BJ (cell line): ENCODE measurements at regions of chr16 and their contacts with region 1.

Region 1: GRCh38 chr16:19502395-19503131 is 19.3 kb downstream of the GDE1 start:
- DNase-seq: no peak
- H3K4me3 ChIP-seq: no peak overlapping the region
- H3K27me3 ChIP-seq: no peaks in the 10 kb centered on the region
- CTCF ChIP-seq: peak; percentile 82

Region 2: GRCh38 chr16:19488213-19488640 is 14.3 kb before region 1 on chr16:
- CTCF ChIA-PET with region 1: interaction called, 16 read pairs
- POLR2A ChIA-PET with region 1: no interaction called
- DNase-seq: no peak
- H3K4me3 ChIP-seq: no peak overlapping the region
- H3K27me3 ChIP-seq: no peaks in the 10 kb centered on the region
- CTCF ChIP-seq: no peak

Region 3: GRCh38 chr16:19517418-19518089 is 15.0 kb after region 1 on chr16:
- CTCF ChIA-PET with region 1: interaction called, 25 read pairs
- POLR2A ChIA-PET with region 1: interaction called, 5 read pairs
- DNase-seq: no peak
- H3K4me3 ChIP-seq: no peak overlapping the region
- H3K27me3 ChIP-seq: no peaks in the 10 kb centered on the region
- CTCF ChIP-seq: no peak

Region 4: DNA sequence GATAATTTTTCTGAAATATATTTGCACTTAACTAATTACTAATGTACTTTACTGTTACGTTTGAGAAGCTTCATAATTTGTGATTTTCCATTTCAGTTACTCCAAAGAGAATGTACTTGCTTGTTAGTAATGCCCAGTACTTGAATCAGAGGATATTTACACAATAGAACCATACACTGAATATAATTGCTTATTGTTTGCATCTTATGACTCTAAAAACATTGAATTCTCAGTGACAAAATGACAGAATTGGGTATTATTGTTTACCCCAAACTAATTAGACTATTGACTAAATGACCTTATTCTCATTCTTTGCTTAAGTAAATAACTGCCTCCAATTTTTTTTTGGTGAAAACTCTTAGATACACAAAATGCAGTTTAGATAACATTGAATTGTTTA is 30.0 kb after region 1 on chr16:
- CTCF ChIA-PET with region 1: no interaction called
- POLR2A ChIA-PET with region 1: no interaction called
- DNase-seq: no peak
- H3K4me3 ChIP-seq: no peak overlapping the region
- H3K27me3 ChIP-seq: no peaks in the 10 kb centered on the region
- CTCF ChIP-seq: no peak